CD8-positive, alpha-beta T cell (primary cell): ENCODE measurements at regions of chr2 and their contacts with region 1.

Region 1: DNA sequence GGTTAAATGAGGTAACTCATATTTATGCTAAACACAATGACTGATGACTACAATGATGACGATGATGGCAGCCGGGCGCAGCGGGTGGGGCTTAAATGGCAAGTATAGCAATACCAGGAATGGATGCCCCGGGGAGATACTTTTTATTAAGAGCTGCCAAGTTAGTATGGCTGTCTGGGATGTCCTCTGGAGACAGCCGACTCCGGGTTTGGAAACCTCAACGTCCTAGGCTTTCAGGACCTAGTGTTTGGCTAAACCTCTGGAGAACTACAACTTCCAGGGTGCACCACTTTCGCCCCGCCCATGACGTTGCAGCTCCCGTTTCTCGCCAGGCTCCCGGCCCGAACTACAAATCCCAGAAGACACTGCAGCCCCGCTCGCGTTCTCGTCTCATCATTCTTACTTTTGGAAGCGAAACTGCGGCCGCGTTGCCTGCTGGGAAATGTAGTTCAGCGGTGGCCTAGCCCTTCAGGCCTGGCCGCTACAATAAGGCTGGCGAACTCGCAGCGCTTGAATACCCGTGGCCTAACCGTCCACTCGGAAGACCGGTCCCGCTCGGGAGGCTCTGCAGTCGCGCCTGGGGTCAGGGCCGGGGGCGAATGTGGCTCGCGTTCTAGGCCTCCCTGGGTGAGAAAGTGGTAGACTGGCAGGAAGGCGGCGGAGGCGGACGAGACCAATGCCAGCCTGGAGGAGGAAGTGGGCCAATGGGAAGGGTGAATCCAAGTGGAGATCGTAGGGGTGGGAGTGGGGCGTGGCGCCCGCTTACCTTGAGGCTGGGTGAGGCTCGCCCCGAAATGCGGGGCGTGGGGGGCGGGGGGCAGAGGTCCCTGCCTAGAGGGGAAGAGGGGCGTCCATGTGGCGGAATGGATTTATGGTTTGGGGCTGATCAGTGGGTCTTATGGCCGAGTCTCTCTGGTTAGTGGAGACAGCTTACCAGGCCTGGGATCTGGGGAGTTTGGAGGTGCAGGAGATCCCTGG is at the start of gene SMARCAL1:
- DNase-seq: peak; percentile 95 to 99 (median 98)
- ATAC-seq: peak; percentile 93
- H3K4me3 ChIP-seq: peak within 1 kb of the TSS; percentile 89 to 92
- H3K4me3 Mint-ChIP-seq: peak within 1 kb of the TSS; percentile 95
- H3K27ac ChIP-seq: peak within 1 kb of the TSS; percentile 68 to 90
- H3K27ac Mint-ChIP-seq: peak within 1 kb of the TSS; percentile 95
- H3K4me1 ChIP-seq: no peaks in the 10 kb centered on the region
- H3K4me1 Mint-ChIP-seq: peaks cover 26% of the 10 kb centered on the region
- H3K27me3 ChIP-seq: no peaks in the 10 kb centered on the region
- H3K27me3 Mint-ChIP-seq: no peaks in the 10 kb centered on the region
- CTCF ChIP-seq: no peak
- total RNA-seq, gene SMARCAL1: 4.6 to 5.3 TPM

Region 2: GRCh38 chr2:214809751-214810564 is 1602.4 kb before region 1 on chr2:
- CTCF ChIA-PET with region 1: no interaction called
- POLR2A ChIA-PET with region 1: no interaction called
- intact Hi-C with region 1: loop called in 1 of 2 experiments (anchors 5 kb)
- DNase-seq: peak; percentile 90 to 98 (median 97)
- ATAC-seq: peak; percentile 79
- H3K4me3 ChIP-seq: peak overlapping the region; percentile 88 to 98
- H3K4me3 Mint-ChIP-seq: peak overlapping the region; percentile 99
- H3K27ac ChIP-seq: peak overlapping the region; percentile 50 to 78
- H3K27ac Mint-ChIP-seq: peak overlapping the region; percentile 72
- H3K4me1 ChIP-seq: peaks cover 17% of the 10 kb centered on the region
- H3K4me1 Mint-ChIP-seq: peaks cover 33% of the 10 kb centered on the region
- H3K27me3 ChIP-seq: no peaks in the 10 kb centered on the region
- H3K27me3 Mint-ChIP-seq: no peaks in the 10 kb centered on the region
- CTCF ChIP-seq: no peak

Region 3: GRCh38 chr2:216013080-216013909 is 399.0 kb before region 1 on chr2 and contains the start of gene MREG:
- CTCF ChIA-PET with region 1: no interaction called
- POLR2A ChIA-PET with region 1: no interaction called
- intact Hi-C with region 1: loop called (anchors 2 to 10 kb)
- DNase-seq: peak; percentile 66 to 92 (median 83)
- ATAC-seq: peak; percentile 80
- H3K4me3 ChIP-seq: peak within 1 kb of the TSS; percentile 44 to 80
- H3K4me3 Mint-ChIP-seq: peak within 1 kb of the TSS; percentile 85
- H3K27ac ChIP-seq: peak within 1 kb of the TSS; percentile 1 to 3
- H3K27ac Mint-ChIP-seq: peak within 1 kb of the TSS; percentile 61
- H3K4me1 ChIP-seq: peaks cover 36% of the 10 kb centered on the region
- H3K4me1 Mint-ChIP-seq: peaks cover 65% of the 10 kb centered on the region
- H3K27me3 ChIP-seq: no peaks in the 10 kb centered on the region
- H3K27me3 Mint-ChIP-seq: no peaks in the 10 kb centered on the region
- CTCF ChIP-seq: peak; percentile 67
- total RNA-seq, gene MREG: 3.2 to 3.6 TPM

Region 4: GRCh38 chr2:216108967-216109921 is 303.1 kb before region 1 on chr2 and contains the start of gene XRCC5:
- CTCF ChIA-PET with region 1: no interaction called
- POLR2A ChIA-PET with region 1: no interaction called
- intact Hi-C with region 1: loop called (anchors 1 kb)
- DNase-seq: peak; percentile 93 to 99 (median 99)
- ATAC-seq: peak; percentile 84
- H3K4me3 ChIP-seq: peak within 1 kb of the TSS; percentile 96
- H3K4me3 Mint-ChIP-seq: peak within 1 kb of the TSS; percentile 100
- H3K27ac ChIP-seq: peak within 1 kb of the TSS; percentile 92 to 96
- H3K27ac Mint-ChIP-seq: peak within 1 kb of the TSS; percentile 100
- H3K4me1 ChIP-seq: peaks cover 46% of the 10 kb centered on the region
- H3K4me1 Mint-ChIP-seq: peaks cover 51% of the 10 kb centered on the region
- H3K27me3 ChIP-seq: no peaks in the 10 kb centered on the region
- H3K27me3 Mint-ChIP-seq: no peaks in the 10 kb centered on the region
- CTCF ChIP-seq: no peak
- total RNA-seq, gene XRCC5: 120 to 125 TPM

Region 5: GRCh38 chr2:216350214-216350789 is 62.0 kb before region 1 on chr2:
- CTCF ChIA-PET with region 1: interaction called, 5 read pairs
- POLR2A ChIA-PET with region 1: interaction called, 3 read pairs
- intact Hi-C with region 1: loop called in 1 of 2 experiments (anchors 2 kb)
- DNase-seq: peak in 7 of 9 experiments; percentile 22 to 70 (median 58)
- ATAC-seq: peak; percentile 67
- H3K4me3 ChIP-seq: no peak overlapping the region
- H3K4me3 Mint-ChIP-seq: no peak overlapping the region
- H3K27ac ChIP-seq: peak overlapping the region in 1 of 2 experiments; percentile 74
- H3K27ac Mint-ChIP-seq: peak overlapping the region; percentile 78
- H3K4me1 ChIP-seq: peaks cover 80% of the 10 kb centered on the region
- H3K4me1 Mint-ChIP-seq: peaks cover 87% of the 10 kb centered on the region
- H3K27me3 ChIP-seq: no peaks in the 10 kb centered on the region
- H3K27me3 Mint-ChIP-seq: no peaks in the 10 kb centered on the region
- CTCF ChIP-seq: no peak

Region 6: DNA sequence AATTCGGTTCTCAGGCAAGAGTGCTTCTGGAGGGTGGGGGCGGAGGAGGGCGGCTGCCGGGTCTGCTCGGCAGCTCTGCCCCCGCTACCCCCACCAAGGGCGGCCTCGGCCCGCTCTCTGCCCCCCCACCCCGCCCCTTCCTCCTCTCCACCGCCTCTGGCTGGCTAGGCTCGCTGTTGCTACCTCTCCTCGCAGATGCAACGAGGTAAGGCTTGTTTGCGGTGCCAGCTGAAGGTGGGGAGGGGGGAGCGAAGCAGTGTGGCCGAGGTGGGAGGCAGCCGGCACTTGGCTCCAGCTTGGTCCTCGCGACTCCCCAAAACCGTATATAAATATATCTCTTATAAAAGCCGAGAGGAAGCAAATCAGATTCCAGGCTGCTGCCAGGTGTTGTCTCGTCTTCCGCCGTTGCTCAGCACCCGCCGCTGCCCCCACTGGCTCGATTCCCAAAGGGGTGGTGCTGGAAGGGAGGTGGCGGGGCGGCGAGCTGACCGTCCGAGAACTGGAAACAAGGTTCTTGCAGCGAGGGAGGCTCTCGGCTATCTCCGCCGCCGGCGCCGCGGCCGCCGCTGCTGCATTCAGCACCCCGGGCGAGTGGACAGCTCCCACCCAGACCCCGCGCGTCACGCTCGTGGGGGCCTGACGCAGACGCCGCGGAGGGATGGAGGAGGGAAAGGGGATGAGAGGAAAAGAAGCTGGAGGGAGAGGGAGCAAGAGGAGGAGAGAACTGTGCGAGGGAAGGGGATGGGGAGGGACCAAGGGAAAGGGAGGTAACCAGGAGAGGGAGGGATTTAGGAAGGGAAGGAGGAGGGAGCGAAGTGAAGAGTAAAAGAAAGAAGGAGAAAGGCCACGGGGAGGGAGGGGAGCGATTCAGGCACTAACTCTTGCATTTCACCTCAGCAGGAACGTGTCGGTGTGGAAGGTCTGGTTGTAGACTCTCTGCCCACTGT is 40.3 kb before region 1 on chr2 and contains the start of gene MARCHF4:
- CTCF ChIA-PET with region 1: no interaction called
- POLR2A ChIA-PET with region 1: no interaction called
- intact Hi-C with region 1: loop called (anchors 1 to 2 kb)
- DNase-seq: peak; percentile 46 to 82 (median 73)
- ATAC-seq: peak; percentile 98
- H3K4me3 ChIP-seq: no peak within 1 kb of the TSS
- H3K4me3 Mint-ChIP-seq: peak within 1 kb of the TSS; percentile 16
- H3K27ac ChIP-seq: no peak within 1 kb of the TSS
- H3K27ac Mint-ChIP-seq: no peak within 1 kb of the TSS
- H3K4me1 ChIP-seq: peaks cover 16% of the 10 kb centered on the region
- H3K4me1 Mint-ChIP-seq: peaks cover 15% of the 10 kb centered on the region
- H3K27me3 ChIP-seq: peaks cover 20 to 23% of the 10 kb centered on the region in 2 experiments
- H3K27me3 Mint-ChIP-seq: peaks cover 49% of the 10 kb centered on the region
- CTCF ChIP-seq: no peak
- total RNA-seq, gene MARCHF4: not detected